HCT116 (cell line): ENCODE measurements at regions of chr3 and their contacts with region 1.

Region 1: GRCh38 chr3:159586571-159587202 is 401.9 kb upstream of the IL12A start:
- DNase-seq: peak; percentile 29
- ATAC-seq: peak; percentile 93
- H3K4me3 ChIP-seq: no peak overlapping the region
- H3K27ac ChIP-seq: no peak overlapping the region
- H3K4me1 ChIP-seq: no peaks in the 10 kb centered on the region
- H3K27me3 ChIP-seq: no peaks in the 10 kb centered on the region
- CTCF ChIP-seq: peak; percentile 58 to 80 (median 80); a peak in 5 of 6 replicates
- POLR2A ChIP-seq: no peak
- RAD21 ChIP-seq: peak; percentile 66

Region 2: GRCh38 chr3:158845765-158846350 is 740.8 kb before region 1 on chr3:
- CTCF ChIA-PET with region 1: no interaction called
- POLR2A ChIA-PET with region 1: no interaction called
- RAD21 ChIA-PET with region 1: no interaction called
- intact Hi-C with region 1: loop called (anchors 10 kb)
- DNase-seq: peak; percentile 27
- ATAC-seq: peak; percentile 85
- H3K4me3 ChIP-seq: no peak overlapping the region
- H3K27ac ChIP-seq: no peak overlapping the region
- H3K4me1 ChIP-seq: no peaks in the 10 kb centered on the region
- H3K27me3 ChIP-seq: no peaks in the 10 kb centered on the region
- CTCF ChIP-seq: peak; percentile 58 to 77 (median 68); a peak in 4 of 6 replicates
- POLR2A ChIP-seq: no peak
- RAD21 ChIP-seq: peak; percentile 87

Region 3: GRCh38 chr3:159260049-159260662 is 326.5 kb before region 1 on chr3:
- CTCF ChIA-PET with region 1: interaction called, 5 read pairs
- POLR2A ChIA-PET with region 1: no interaction called
- RAD21 ChIA-PET with region 1: no interaction called
- intact Hi-C with region 1: loop called (anchors 1 kb)
- DNase-seq: peak; percentile 45
- ATAC-seq: peak; percentile 74
- H3K4me3 ChIP-seq: no peak overlapping the region
- H3K27ac ChIP-seq: no peak overlapping the region
- H3K4me1 ChIP-seq: no peaks in the 10 kb centered on the region
- H3K27me3 ChIP-seq: 0 out of 2 replicates have a peak, but pooled peaks cover 6% of the 10 kb centered on the region
- CTCF ChIP-seq: peak; percentile 59 to 89 (median 83)
- POLR2A ChIP-seq: no peak
- RAD21 ChIP-seq: peak; percentile 89

Region 4: GRCh38 chr3:159266779-159267178 is 319.9 kb before region 1 on chr3:
- CTCF ChIA-PET with region 1: interaction called, 15 read pairs
- POLR2A ChIA-PET with region 1: no interaction called
- RAD21 ChIA-PET with region 1: no interaction called
- intact Hi-C with region 1: loop called (anchors 1 kb)
- DNase-seq: peak; percentile 26
- ATAC-seq: peak; percentile 70
- H3K4me3 ChIP-seq: no peak overlapping the region
- H3K27ac ChIP-seq: no peak overlapping the region
- H3K4me1 ChIP-seq: no peaks in the 10 kb centered on the region
- H3K27me3 ChIP-seq: 0 out of 2 replicates have a peak, but pooled peaks cover 6% of the 10 kb centered on the region
- CTCF ChIP-seq: peak; percentile 31 to 62 (median 42); a peak in 5 of 6 replicates
- POLR2A ChIP-seq: no peak
- RAD21 ChIP-seq: peak; percentile 58

Region 5: GRCh38 chr3:159293493-159293892 is 293.2 kb before region 1 on chr3:
- CTCF ChIA-PET with region 1: no interaction called
- POLR2A ChIA-PET with region 1: no interaction called
- RAD21 ChIA-PET with region 1: no interaction called
- intact Hi-C with region 1: no loop called
- DNase-seq: no peak
- ATAC-seq: no peak
- H3K4me3 ChIP-seq: no peak overlapping the region
- H3K27ac ChIP-seq: no peak overlapping the region
- H3K4me1 ChIP-seq: no peaks in the 10 kb centered on the region
- H3K27me3 ChIP-seq: no peaks in the 10 kb centered on the region
- CTCF ChIP-seq: no peak
- POLR2A ChIP-seq: no peak
- RAD21 ChIP-seq: no peak

Region 6: GRCh38 chr3:159322322-159322939 is 264.3 kb before region 1 on chr3:
- CTCF ChIA-PET with region 1: interaction called, 9 read pairs
- POLR2A ChIA-PET with region 1: no interaction called
- RAD21 ChIA-PET with region 1: interaction called in 1 of 2 experiments, 3 read pairs
- intact Hi-C with region 1: loop called (anchors 1 kb)
- DNase-seq: peak; percentile 41
- ATAC-seq: peak; percentile 99
- H3K4me3 ChIP-seq: no peak overlapping the region
- H3K27ac ChIP-seq: no peak overlapping the region
- H3K4me1 ChIP-seq: no peaks in the 10 kb centered on the region; a peak in 1 of 4 replicates
- H3K27me3 ChIP-seq: no peaks in the 10 kb centered on the region
- CTCF ChIP-seq: peak; percentile 65 to 98 (median 97); a peak in 5 of 6 replicates
- POLR2A ChIP-seq: no peak
- RAD21 ChIP-seq: peak; percentile 68